ENCODE measurements at regions of chr12 and their contacts with region 1.

Region 1: DNA sequence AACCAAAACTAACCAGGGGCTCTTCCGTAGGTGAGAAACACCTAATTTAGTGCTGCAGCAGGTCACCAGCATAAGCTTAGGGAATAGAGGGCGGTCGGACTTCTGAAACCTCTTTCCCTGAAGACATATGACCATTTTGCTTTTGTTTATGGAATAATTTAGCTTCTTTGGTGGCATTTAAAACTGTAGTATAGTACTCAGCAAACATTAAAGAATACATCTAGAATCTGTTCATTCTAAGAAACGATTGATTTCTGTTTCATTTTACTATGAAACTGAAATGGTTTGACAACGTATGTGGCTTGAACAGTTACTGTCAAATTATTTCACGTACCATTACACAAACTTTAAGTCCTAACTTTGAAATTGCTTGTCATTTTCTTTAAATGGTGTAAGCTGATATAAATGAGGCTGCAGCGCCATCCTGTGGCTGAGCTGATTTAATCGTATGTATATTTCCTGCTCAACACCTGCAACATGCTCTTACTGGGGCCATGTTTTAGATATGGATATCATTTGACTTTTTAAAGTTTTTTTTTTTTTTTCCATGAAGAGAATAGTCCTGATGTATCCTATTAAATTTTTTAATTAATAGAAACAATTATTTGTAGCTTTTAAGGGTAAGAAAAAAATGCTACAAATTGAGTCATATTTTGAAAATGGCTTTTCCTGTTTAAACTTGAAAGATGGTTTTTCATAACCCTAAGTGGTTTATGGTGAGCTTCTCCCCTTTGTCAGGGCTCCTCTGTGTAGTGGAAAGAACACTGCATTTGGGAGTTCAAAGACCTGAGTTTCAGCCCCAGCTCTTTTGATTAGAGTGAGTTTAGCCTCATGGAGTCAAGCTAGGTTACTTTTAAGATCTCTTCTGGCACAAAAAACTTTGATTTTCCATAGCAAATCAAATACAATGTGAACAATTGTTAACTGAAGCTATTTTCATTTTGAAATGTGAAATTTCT is 27.4 kb downstream of the CFAP54 start:
- DNase-seq: peak; percentile 59 to 84 (median 78)
- ATAC-seq: peak; percentile 95
- H3K4me3 ChIP-seq: no peak overlapping the region
- H3K4me3 Mint-ChIP-seq: peak overlapping the region in 5 of 10 donors; percentile 4 to 46 (median 33)
- H3K27ac ChIP-seq: no peak overlapping the region
- H3K27ac Mint-ChIP-seq: peak overlapping the region in 8 of 9 donors; percentile 46 to 86 (median 78)
- H3K4me1 ChIP-seq: peaks cover 4 to 5% of the 10 kb centered on the region in 2 donors
- H3K4me1 Mint-ChIP-seq: peaks cover 4 to 22% (median 15%) of the 10 kb centered on the region in 7 donors
- H3K27me3 ChIP-seq: no peaks in the 10 kb centered on the region
- H3K27me3 Mint-ChIP-seq: no peaks in the 10 kb centered on the region

Region 2: GRCh38 chr12:96061864-96062453 is 454.8 kb before region 1 on chr12:
- CTCF ChIA-PET with region 1: interaction called, 38 read pairs
- POLR2A ChIA-PET with region 1: interaction called, 3 read pairs
- intact Hi-C with region 1: loop called (anchors 1 kb)
- DNase-seq: peak; percentile 39 to 79 (median 70)
- ATAC-seq: peak; percentile 94
- H3K4me3 ChIP-seq: no peak overlapping the region
- H3K4me3 Mint-ChIP-seq: no peak overlapping the region
- H3K27ac ChIP-seq: no peak overlapping the region
- H3K27ac Mint-ChIP-seq: peak overlapping the region in 2 of 9 donors; percentile 1 to 28
- H3K4me1 ChIP-seq: peaks cover 0 to 12% of the 10 kb centered on the region in 2 donors
- H3K4me1 Mint-ChIP-seq: peaks cover 8 to 31% (median 30%) of the 10 kb centered on the region in 7 donors
- H3K27me3 ChIP-seq: no peaks in the 10 kb centered on the region
- H3K27me3 Mint-ChIP-seq: no peaks in the 10 kb centered on the region

Region 3: DNA sequence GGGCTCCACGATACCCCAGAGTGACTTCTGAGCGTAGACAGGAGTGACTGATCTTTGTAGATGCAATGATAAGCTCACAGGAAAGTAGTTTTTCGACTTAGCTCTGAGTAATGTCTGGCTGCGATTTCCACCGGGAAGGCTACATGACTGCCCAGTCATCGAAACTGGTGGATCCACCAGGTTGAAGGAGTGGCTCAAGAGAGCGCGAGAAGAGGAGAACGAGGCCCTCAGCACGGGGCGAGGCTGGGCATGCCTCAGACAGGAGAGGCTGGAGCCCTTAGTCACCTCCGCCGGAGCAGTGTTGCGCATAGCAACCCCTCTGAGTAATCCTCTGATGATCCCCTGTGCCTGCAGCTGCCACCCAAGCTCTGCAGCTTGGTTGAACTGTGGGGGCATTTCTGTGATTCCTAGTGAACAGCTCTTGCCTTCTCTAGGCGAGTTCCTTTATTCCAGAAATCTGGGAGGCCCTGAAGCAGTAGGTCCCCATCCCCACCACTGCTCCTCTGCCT is 297.0 kb before region 1 on chr12:
- CTCF ChIA-PET with region 1: interaction called, 65 read pairs
- POLR2A ChIA-PET with region 1: interaction called, 5 read pairs
- intact Hi-C with region 1: loop called (anchors 1 kb)
- DNase-seq: no peak
- ATAC-seq: no peak
- H3K4me3 ChIP-seq: no peak overlapping the region
- H3K4me3 Mint-ChIP-seq: no peak overlapping the region
- H3K27ac ChIP-seq: no peak overlapping the region
- H3K27ac Mint-ChIP-seq: peak overlapping the region in 2 of 9 donors; percentile 20 to 51
- H3K4me1 ChIP-seq: peaks cover 6 to 7% of the 10 kb centered on the region in 2 donors
- H3K4me1 Mint-ChIP-seq: peaks cover 12 to 60% (median 40%) of the 10 kb centered on the region in 7 donors
- H3K27me3 ChIP-seq: no peaks in the 10 kb centered on the region
- H3K27me3 Mint-ChIP-seq: no peaks in the 10 kb centered on the region

Region 4: DNA sequence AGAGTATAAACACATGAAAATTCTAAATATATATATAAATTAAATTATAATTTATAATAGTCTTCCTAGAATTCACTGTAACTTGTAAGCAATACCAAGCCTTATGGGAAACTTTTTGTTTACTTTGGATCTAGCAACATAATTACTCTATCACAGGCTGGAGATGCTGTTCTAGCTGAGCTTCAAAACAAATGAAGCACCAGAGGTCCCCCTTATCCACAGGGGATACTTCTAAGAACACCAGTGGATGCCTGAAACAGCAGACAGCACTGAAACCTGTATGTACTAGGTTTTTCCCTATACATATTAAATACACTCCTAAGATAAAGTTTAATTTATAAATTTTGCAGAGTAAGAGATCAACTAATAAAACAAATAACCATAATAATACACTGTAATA is 213.1 kb before region 1 on chr12:
- CTCF ChIA-PET with region 1: interaction called, 3 read pairs
- POLR2A ChIA-PET with region 1: no interaction called
- intact Hi-C with region 1: loop called in 1 of 2 experiments (anchors 1 kb)
- DNase-seq: no peak
- ATAC-seq: no peak
- H3K4me3 ChIP-seq: no peak overlapping the region
- H3K4me3 Mint-ChIP-seq: no peak overlapping the region
- H3K27ac ChIP-seq: no peak overlapping the region
- H3K27ac Mint-ChIP-seq: no peak overlapping the region
- H3K4me1 ChIP-seq: no peaks in the 10 kb centered on the region
- H3K4me1 Mint-ChIP-seq: peaks cover 8 to 45% (median 30%) of the 10 kb centered on the region in 7 donors
- H3K27me3 ChIP-seq: no peaks in the 10 kb centered on the region
- H3K27me3 Mint-ChIP-seq: no peaks in the 10 kb centered on the region

Region 5: GRCh38 chr12:96419576-96420271 is 97.0 kb before region 1 on chr12:
- CTCF ChIA-PET with region 1: interaction called, 3 read pairs
- POLR2A ChIA-PET with region 1: no interaction called
- intact Hi-C with region 1: loop called in 1 of 2 experiments (anchors 1 kb)
- DNase-seq: no peak
- ATAC-seq: no peak
- H3K4me3 ChIP-seq: no peak overlapping the region
- H3K4me3 Mint-ChIP-seq: peak overlapping the region in 1 of 10 donors; percentile 83
- H3K27ac ChIP-seq: no peak overlapping the region
- H3K27ac Mint-ChIP-seq: peak overlapping the region; percentile 32 to 92 (median 73)
- H3K4me1 ChIP-seq: peaks cover 0 to 7% of the 10 kb centered on the region in 2 donors
- H3K4me1 Mint-ChIP-seq: peaks cover 0 to 42% (median 25%) of the 10 kb centered on the region in 7 donors
- H3K27me3 ChIP-seq: no peaks in the 10 kb centered on the region
- H3K27me3 Mint-ChIP-seq: no peaks in the 10 kb centered on the region

Region 6: GRCh38 chr12:96489103-96490056 is 27.4 kb before region 1 on chr12 and contains the start of gene CFAP54:
- CTCF ChIA-PET with region 1: interaction called, 35 read pairs
- POLR2A ChIA-PET with region 1: no interaction called
- intact Hi-C with region 1: loop called (anchors 1 kb)
- DNase-seq: peak; percentile 91 to 97 (median 94)
- ATAC-seq: peak; percentile 96
- H3K4me3 ChIP-seq: peak within 1 kb of the TSS; percentile 71
- H3K4me3 Mint-ChIP-seq: peak within 1 kb of the TSS; percentile 77 to 93 (median 88)
- H3K27ac ChIP-seq: peak within 1 kb of the TSS; percentile 66
- H3K27ac Mint-ChIP-seq: peak within 1 kb of the TSS; percentile 68 to 96 (median 89)
- H3K4me1 ChIP-seq: peaks cover 7 to 12% of the 10 kb centered on the region in 2 donors
- H3K4me1 Mint-ChIP-seq: peaks cover 14 to 37% (median 22%) of the 10 kb centered on the region in 7 donors
- H3K27me3 ChIP-seq: no peaks in the 10 kb centered on the region
- H3K27me3 Mint-ChIP-seq: peaks cover 0 to 33% (median 0%) of the 10 kb centered on the region in 5 donors
- total RNA-seq, gene CFAP54: 0.22 to 0.93 (median 0.30) TPM